Right cardiac atrium (tissue), 5 donors: ENCODE measurements at regions of chr18 and their contacts with region 1.

Region 1: DNA sequence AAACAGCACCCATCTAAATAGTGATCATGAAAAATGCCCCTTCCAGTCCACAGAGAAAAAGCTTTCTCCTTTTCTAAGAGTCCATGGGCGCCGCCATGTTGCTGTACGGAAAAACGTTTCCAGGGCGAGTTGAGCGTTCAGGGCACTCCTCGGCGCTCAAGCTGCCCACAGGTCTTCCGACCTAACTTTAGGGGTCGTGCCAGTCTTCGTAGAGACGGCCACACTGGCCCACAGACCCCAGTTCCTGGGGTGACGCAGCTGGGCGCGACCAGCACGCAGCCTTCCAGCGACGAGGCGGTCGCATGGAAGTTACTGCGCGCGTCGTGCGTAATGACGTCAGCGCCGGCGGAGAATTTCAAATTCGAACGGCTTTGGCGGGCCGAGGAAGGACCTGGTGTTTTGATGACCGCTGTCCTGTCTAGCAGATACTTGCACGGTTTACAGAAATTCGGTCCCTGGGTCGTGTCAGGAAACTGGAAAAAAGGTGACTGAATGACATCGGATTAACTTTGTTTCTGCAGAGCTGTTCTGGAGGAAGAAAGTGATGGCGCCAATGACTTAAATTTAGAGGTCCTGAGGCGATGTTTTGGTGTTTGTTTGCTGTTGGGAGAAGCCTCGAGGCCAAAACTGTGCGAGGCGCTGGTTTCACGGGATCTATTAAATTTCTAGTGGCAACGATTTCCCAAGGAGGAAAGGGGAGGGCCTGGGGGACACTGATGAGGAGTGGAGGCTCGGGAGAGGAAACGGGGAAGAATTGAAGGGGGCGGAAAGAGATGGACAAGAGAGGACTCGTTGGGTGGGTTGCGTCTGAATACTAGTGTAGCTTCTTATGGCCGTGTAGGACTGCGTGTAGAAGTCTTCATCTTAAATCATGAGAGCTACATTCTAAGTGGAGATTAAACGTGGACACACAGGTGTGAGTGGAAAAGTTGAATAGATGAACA is at the starts of genes METTL4 and NDC80:
- DNase-seq: peak; percentile 86 to 94 (median 93)
- ATAC-seq: peak; percentile 95 to 96
- H3K4me3 ChIP-seq: peak within 1 kb of the TSS; percentile 83
- H3K27ac ChIP-seq: peak within 1 kb of the TSS; percentile 92
- H3K4me1 ChIP-seq: no peaks in the 10 kb centered on the region
- H3K27me3 ChIP-seq: no peaks in the 10 kb centered on the region
- total RNA-seq, gene METTL4: 6.3 to 10.8 (median 9.3) TPM
- total RNA-seq, gene NDC80: 0.17 to 1.1 (median 0.36) TPM

Region 2: GRCh38 chr18:2655178-2655953 is 83.9 kb after region 1 on chr18 and contains the start of gene SMCHD1:
- intact Hi-C with region 1: loop called in 2 of 4 experiments (anchors 5 to 10 kb)
- DNase-seq: peak; percentile 90 to 97 (median 96)
- ATAC-seq: peak; percentile 90 to 91
- H3K4me3 ChIP-seq: peak within 1 kb of the TSS; percentile 77
- H3K27ac ChIP-seq: peak within 1 kb of the TSS; percentile 98
- H3K4me1 ChIP-seq: peaks cover 3% of the 10 kb centered on the region
- H3K27me3 ChIP-seq: no peaks in the 10 kb centered on the region
- total RNA-seq, gene SMCHD1: 26.3 to 31.4 (median 31.1) TPM

Region 3: DNA sequence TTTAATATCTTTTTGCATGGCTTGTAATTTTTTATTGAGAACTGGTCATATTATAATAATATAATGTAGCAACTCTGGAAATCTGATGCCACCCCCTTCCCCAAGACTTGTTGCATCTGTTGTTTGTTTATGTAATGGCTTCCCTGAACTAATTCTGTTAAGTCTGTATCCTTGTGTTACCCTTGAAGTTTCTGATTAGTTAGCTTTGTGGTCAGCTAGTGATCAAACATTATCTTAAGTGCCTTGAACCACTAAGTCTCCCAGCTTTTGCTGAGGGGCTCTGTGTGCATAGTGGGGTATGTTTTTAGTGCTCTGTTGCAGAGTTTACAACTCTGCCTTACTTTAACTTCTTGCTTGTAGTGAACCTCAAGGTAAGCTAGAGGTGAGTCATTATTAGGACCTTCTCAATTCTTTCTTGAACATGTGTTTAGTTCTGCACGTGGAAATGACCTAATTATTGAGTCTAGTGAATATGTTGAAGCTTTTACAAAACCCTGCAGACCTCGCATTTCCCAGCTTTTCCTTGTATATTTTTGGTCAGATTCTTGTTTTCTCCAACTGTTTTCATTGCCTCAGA is 108.8 kb after region 1 on chr18:
- intact Hi-C with region 1: no loop called
- DNase-seq: no peak
- ATAC-seq: no peak
- H3K4me3 ChIP-seq: no peak overlapping the region
- H3K27ac ChIP-seq: no peak overlapping the region
- H3K4me1 ChIP-seq: no peaks in the 10 kb centered on the region
- H3K27me3 ChIP-seq: no peaks in the 10 kb centered on the region